ENCODE measurements at regions of chr15 and their contacts with region 1.

Region 1: DNA sequence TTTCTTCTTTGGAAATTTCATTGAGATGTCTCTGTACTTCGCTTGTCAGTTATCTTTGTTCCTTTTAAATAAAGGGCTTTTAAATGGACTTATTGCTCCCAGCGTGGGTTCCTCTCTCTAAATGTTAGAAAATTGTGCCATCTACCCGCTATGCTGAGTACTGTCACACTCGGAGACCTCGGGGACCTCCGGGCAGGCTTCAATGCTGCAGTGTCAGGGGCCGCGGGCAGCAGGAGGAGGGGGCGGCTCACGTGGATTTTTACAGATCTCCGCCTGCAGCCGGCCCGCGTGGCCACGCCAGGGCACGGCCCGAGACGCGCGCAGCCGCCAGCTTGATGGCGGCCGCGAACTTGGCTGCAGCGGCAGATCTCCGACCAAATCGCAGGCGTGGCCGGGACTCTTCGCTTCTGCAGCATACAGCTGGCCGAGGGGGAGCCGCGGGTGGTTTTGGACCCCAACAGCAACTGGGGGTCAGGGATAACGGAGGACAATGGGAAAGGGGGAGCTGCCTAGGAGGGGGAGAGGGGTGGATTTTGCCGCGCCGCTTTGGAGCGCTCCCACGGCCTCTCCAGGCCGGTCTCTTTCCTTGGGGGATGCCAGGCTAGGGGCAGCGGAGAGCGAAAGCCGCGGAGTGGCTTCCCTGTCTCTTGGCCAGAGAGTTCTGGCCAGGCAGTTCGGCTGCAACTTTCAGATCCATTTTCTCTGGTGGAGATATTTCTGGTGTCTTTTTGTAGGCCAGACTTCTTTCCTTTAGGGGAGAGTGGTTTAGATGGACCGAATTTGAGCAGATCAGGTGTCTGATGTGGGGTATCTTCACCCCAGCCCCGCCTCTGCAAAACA is 15.3 kb downstream of the NR2F2 start:
- DNase-seq: peak; percentile 88
- ATAC-seq: peak; percentile 73 to 83

Region 2: GRCh38 chr15:95025924-95026728 is 1319.7 kb before region 1 on chr15:
- intact Hi-C with region 1: loop called in 1 of 2 experiments (anchors 10 kb)
- DNase-seq: peak; percentile 50
- ATAC-seq: peak in 1 of 2 donors; percentile 35

Region 3: GRCh38 chr15:95304947-95305400 is 1040.8 kb before region 1 on chr15:
- intact Hi-C with region 1: loop called in 1 of 2 experiments (anchors 5 kb)
- DNase-seq: no peak
- ATAC-seq: no peak

Measured in left cardiac atrium (tissue), 4 donors.